Lower lobe of right lung (tissue), 2 donors: ENCODE measurements at regions of chr15 and their contacts with region 1.

Region 1: GRCh38 chr15:34223904-34224596 is 766 bp upstream of the EMC4 start:
- DNase-seq: no peak
- ATAC-seq: peak; percentile 6 to 24
- H3K4me3 ChIP-seq: peak overlapping the region; percentile 92
- H3K27ac ChIP-seq: peak overlapping the region; percentile 89
- H3K4me1 ChIP-seq: peaks cover 19% of the 10 kb centered on the region
- H3K27me3 ChIP-seq: no peaks in the 10 kb centered on the region
- CTCF ChIP-seq: no peak

Region 2: GRCh38 chr15:34099914-34100313 is 124.1 kb before region 1 on chr15:
- intact Hi-C with region 1: loop called (anchors 10 kb)
- DNase-seq: no peak
- ATAC-seq: no peak
- H3K4me3 ChIP-seq: no peak overlapping the region
- H3K27ac ChIP-seq: no peak overlapping the region
- H3K4me1 ChIP-seq: peaks cover 25% of the 10 kb centered on the region
- H3K27me3 ChIP-seq: no peaks in the 10 kb centered on the region
- CTCF ChIP-seq: no peak